ENCODE measurements at regions of chr11 and their contacts with region 1.

Region 1: DNA sequence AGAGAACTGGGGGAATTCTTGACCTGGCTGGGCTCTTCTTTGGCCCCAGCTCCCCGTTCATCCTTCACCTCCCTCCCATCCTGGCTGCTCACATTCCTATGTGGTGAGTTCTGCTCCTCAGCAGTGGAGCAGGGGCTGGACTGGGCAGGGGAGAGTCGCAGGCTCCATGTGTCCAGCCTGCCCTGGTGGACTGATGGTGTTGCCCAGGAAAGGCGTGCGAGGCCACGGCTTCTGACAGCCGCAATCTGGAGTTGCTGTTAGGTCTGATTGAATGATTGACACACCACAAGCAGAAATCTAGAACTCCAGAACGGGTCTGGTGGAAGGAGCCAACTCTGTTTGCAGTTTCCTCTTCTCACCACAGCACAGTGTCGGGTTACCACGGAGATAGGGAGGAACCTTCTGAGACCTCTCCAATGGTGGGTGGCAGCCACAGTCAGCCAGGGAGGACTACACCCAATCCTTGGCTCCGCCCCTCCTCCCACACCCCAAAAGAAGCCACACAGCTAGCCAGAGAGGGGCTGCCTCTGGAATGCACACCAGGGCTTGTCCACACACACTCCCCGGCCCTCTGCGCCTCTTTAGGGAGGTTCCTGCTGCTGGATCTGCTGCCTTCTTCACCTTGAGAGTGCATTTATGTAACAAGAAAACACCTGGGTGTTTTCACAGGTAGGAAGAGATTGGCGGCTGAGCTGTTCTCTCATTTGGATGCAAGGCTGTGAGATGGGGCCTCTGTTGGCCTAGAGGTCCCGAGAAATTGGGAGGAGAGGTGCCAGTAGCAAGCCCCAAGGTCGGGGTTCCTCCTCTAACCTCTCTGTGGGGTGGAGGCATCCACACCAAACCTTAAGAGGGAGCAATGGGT is 56.4 kb upstream of the CD44 start:
- DNase-seq: peak; percentile 69
- ATAC-seq: peak; percentile 66
- H3K4me3 Mint-ChIP-seq: peak overlapping the region; percentile 67
- H3K27ac Mint-ChIP-seq: peak overlapping the region; percentile 93
- H3K4me1 Mint-ChIP-seq: peaks cover 83% of the 10 kb centered on the region
- H3K27me3 Mint-ChIP-seq: no peaks in the 10 kb centered on the region
- CTCF ChIP-seq: no peak

Region 2: GRCh38 chr11:34185926-34186841 is 896.4 kb before region 1 on chr11:
- CTCF ChIA-PET with region 1: no interaction called
- POLR2A ChIA-PET with region 1: no interaction called
- intact Hi-C with region 1: no loop called
- DNase-seq: no peak
- ATAC-seq: no peak
- H3K4me3 Mint-ChIP-seq: no peak overlapping the region
- H3K27ac Mint-ChIP-seq: no peak overlapping the region
- H3K4me1 Mint-ChIP-seq: peaks cover 26% of the 10 kb centered on the region
- H3K27me3 Mint-ChIP-seq: no peaks in the 10 kb centered on the region
- CTCF ChIP-seq: no peak

Region 3: GRCh38 chr11:34234086-34234740 is 848.3 kb before region 1 on chr11:
- CTCF ChIA-PET with region 1: no interaction called
- POLR2A ChIA-PET with region 1: no interaction called
- intact Hi-C with region 1: loop called (anchors 5 kb)
- DNase-seq: peak; percentile 67
- ATAC-seq: peak; percentile 75
- H3K4me3 Mint-ChIP-seq: peak overlapping the region; percentile 73
- H3K27ac Mint-ChIP-seq: peak overlapping the region; percentile 97
- H3K4me1 Mint-ChIP-seq: peaks cover 76% of the 10 kb centered on the region
- H3K27me3 Mint-ChIP-seq: no peaks in the 10 kb centered on the region
- CTCF ChIP-seq: no peak

Region 4: GRCh38 chr11:35013514-35014233 is 68.9 kb before region 1 on chr11:
- CTCF ChIA-PET with region 1: interaction called, 3 read pairs
- POLR2A ChIA-PET with region 1: interaction called, 7 read pairs
- intact Hi-C with region 1: loop called (anchors 1 kb)
- DNase-seq: no peak
- ATAC-seq: peak; percentile 47
- H3K4me3 Mint-ChIP-seq: peak overlapping the region; percentile 59
- H3K27ac Mint-ChIP-seq: peak overlapping the region; percentile 90
- H3K4me1 Mint-ChIP-seq: peaks cover 43% of the 10 kb centered on the region
- H3K27me3 Mint-ChIP-seq: no peaks in the 10 kb centered on the region
- CTCF ChIP-seq: no peak

Region 5: DNA sequence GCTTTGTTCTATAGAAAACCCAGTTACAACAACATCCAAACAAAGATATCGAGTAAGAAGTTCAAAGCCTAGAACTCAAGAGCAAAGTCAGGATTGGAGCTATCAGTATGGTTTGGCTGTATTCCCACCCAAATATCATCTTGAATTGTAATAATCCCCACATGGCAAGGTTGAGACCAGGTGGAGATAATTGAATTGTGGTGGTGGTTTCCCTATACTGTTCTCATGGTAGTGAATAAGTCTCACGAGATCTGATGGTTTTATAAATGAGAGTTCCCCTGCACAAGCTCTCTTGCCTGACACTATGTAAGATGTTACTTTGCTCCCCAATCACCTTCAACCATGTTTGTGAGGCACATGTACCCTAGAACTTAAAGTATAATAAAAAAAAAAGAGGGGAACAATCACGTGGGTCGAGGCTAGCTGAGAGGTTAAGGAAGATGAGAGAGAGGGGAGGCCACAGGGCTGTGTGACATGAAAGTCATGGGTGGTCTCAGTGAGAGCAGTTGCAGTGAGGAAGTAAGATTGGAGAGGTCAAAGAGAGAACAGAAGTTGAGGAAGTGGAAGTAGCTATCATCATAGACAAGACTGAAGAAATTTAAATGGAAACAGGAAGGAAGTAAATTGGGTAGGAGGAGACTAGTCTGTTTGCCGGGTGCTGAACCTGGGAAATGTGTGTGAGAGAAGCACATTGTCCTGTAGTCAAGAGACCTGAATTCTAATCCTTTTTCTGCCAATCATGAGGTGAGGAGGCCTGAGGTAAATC is 23.7 kb before region 1 on chr11:
- CTCF ChIA-PET with region 1: no interaction called
- POLR2A ChIA-PET with region 1: interaction called, 4 read pairs
- intact Hi-C with region 1: loop called (anchors 1 kb)
- DNase-seq: no peak
- ATAC-seq: peak; percentile 82
- H3K4me3 Mint-ChIP-seq: peak overlapping the region; percentile 17
- H3K27ac Mint-ChIP-seq: peak overlapping the region; percentile 83
- H3K4me1 Mint-ChIP-seq: peaks cover 45% of the 10 kb centered on the region
- H3K27me3 Mint-ChIP-seq: no peaks in the 10 kb centered on the region
- CTCF ChIP-seq: no peak

Region 6: DNA sequence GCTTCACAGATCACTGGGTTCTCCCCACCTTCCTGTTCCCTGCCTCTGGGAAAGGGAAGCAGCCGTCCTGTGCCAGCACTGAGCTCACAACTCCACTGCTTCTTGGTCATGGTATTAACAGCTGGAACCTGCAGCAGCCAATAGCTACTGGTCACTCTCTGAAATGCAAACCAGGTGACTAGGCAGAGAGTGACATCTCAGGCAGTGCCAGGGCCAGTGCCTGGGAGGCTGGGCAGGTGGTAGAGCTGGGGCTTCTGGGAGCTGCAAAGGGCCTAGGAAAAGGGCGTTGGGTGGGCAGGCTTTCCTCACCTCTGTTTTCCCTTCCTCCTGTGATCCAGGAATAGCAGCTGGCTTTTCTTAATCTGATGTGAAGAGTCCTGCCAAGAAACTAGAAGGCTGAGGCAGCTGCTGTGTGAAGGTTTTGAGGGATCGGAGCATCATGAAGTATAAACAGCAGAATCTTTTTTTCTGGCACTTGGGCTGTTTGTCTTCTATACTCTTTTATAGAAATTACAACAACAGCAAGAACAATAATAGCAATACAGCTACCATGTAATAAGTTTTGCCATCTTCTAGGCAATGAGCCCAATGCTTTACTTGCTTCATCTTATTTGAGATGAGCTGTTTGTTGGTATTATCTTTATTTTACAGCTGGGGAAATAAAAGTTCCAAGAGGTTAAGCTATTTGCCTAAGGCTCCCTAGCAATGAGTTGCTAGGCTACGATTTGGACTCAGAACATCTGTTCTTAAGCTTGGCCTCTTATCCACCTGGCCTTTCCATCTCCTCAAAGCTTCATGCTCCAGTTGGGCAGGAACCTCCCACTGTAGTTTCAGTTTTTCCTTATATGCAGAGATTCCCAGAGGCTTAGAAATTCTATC is 34.4 kb after region 1 on chr11:
- CTCF ChIA-PET with region 1: no interaction called
- POLR2A ChIA-PET with region 1: interaction called, 49 read pairs
- intact Hi-C with region 1: no loop called
- DNase-seq: no peak
- ATAC-seq: no peak
- H3K4me3 Mint-ChIP-seq: no peak overlapping the region
- H3K27ac Mint-ChIP-seq: peak overlapping the region; percentile 66
- H3K4me1 Mint-ChIP-seq: peaks cover 85% of the 10 kb centered on the region
- H3K27me3 Mint-ChIP-seq: no peaks in the 10 kb centered on the region
- CTCF ChIP-seq: no peak

Region 7: DNA sequence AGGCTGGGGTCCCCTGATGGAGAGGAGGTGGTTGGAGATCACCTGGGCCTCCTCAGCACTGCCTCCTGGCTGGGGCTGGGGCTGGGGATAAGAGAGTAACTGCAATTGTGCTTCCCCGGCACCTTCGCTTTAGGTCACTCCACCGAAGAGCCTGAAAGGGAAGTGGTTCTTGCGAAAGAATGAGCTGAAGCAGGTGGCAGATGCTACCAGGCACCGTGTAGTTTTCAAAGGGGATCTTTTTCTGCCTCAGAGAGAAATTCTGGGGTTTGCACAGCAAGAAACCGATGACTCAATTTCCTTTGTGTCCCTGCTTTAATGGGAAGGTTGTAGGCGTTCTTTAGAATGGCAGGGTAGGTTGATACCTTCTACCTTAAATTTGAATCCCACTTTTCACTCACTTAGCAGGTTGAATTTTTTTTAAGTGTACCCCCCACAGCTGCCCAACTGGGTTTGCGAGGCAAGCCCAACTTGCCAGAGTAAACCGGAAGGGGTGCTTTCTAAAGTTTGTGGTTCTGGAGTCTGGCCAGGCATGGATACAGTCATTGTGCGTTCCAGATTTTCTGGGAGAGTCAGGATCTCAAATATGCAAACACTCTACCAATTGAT is 61.7 kb after region 1 on chr11:
- CTCF ChIA-PET with region 1: interaction called, 8 read pairs
- POLR2A ChIA-PET with region 1: interaction called, 145 read pairs
- intact Hi-C with region 1: loop called (anchors 1 kb)
- DNase-seq: peak; percentile 63
- ATAC-seq: peak; percentile 62
- H3K4me3 Mint-ChIP-seq: peak overlapping the region; percentile 97
- H3K27ac Mint-ChIP-seq: peak overlapping the region; percentile 90
- H3K4me1 Mint-ChIP-seq: peaks cover 81% of the 10 kb centered on the region
- H3K27me3 Mint-ChIP-seq: no peaks in the 10 kb centered on the region
- CTCF ChIP-seq: no peak

Region 8: DNA sequence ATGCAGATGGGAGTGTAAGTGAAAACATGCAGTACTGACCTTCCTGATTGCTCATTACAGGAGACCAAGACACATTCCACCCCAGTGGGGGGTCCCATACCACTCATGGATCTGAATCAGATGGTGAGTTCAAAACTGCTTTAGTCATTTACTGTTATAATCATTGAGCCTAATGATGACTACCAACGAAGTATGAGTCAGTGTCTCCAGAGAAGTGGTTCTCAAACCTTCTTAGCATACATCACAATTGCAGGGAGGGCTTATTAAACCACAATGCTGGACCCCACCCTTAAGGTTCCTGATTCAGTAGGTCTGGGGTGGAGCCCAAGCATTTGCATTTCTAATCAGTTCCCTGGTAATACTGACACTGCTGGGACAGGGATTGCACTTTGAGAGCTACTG is 132.2 kb after region 1 on chr11:
- CTCF ChIA-PET with region 1: no interaction called
- POLR2A ChIA-PET with region 1: no interaction called
- intact Hi-C with region 1: loop called (anchors 5 kb)
- DNase-seq: no peak
- ATAC-seq: peak; percentile 32
- H3K4me3 Mint-ChIP-seq: peak overlapping the region; percentile 44
- H3K27ac Mint-ChIP-seq: peak overlapping the region; percentile 70
- H3K4me1 Mint-ChIP-seq: peaks cover 82% of the 10 kb centered on the region
- H3K27me3 Mint-ChIP-seq: no peaks in the 10 kb centered on the region
- CTCF ChIP-seq: no peak